Right lobe of liver (tissue), 6 donors: ENCODE measurements at regions of chr6 and their contacts with region 1.

Region 1: GRCh38 chr6:85354761-85355618 is 94.9 kb upstream of the NT5E start:
- DNase-seq: peak; percentile 63 to 71 (median 64)
- ATAC-seq: peak; percentile 99 to 100 (median 99)
- H3K4me3 ChIP-seq: no peak overlapping the region
- H3K27ac ChIP-seq: no peak overlapping the region
- H3K4me1 ChIP-seq: peaks cover 0 to 7% (median 0%) of the 10 kb centered on the region in 4 donors
- H3K27me3 ChIP-seq: no peaks in the 10 kb centered on the region
- CTCF ChIP-seq: peak; percentile 93 to 97 (median 96)
- POLR2A ChIP-seq: no peak

Region 2: GRCh38 chr6:85482905-85483700 is 128.1 kb after region 1 on chr6:
- intact Hi-C with region 1: loop called (anchors 2 to 10 kb)
- DNase-seq: peak; percentile 74 to 80 (median 76)
- ATAC-seq: peak; percentile 96 to 100 (median 98)
- H3K4me3 ChIP-seq: no peak overlapping the region
- H3K27ac ChIP-seq: peak overlapping the region in 1 of 3 donors; percentile 16
- H3K4me1 ChIP-seq: peaks cover 0 to 4% (median 0%) of the 10 kb centered on the region in 4 donors
- H3K27me3 ChIP-seq: no peaks in the 10 kb centered on the region
- CTCF ChIP-seq: peak in 3 of 4 donors; percentile 99 to 100 (median 100)
- POLR2A ChIP-seq: no peak